ENCODE measurements at regions of chr17 and their contacts with region 1.

Region 1: DNA sequence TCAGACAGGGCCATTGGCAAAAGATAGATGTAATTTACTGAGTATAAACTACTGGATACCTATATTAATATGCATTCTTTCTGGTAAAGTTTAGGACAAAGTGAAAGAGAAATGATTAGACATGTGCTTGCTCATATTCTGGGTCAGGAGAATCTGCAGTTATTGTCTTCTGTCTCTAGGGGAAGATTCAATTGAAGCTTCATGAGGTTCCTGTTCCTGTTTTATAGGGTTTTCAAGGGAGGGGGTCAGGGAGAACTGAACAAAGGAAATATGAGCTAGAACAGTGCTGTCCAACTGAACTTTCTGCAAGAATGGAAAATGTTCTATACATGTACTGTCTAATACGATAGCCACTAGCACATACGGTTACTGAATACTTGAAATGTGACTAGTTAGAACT is 59.3 kb upstream of the CORO6 start:
- DNase-seq: no peak
- ATAC-seq: peak; percentile 93
- H3K4me3 Mint-ChIP-seq: peak overlapping the region; percentile 21
- H3K27ac Mint-ChIP-seq: peak overlapping the region; percentile 81
- H3K4me1 Mint-ChIP-seq: peaks cover 27% of the 10 kb centered on the region
- H3K27me3 Mint-ChIP-seq: no peaks in the 10 kb centered on the region
- CTCF ChIP-seq: no peak

Region 2: GRCh38 chr17:29699283-29699682 is 17.2 kb after region 1 on chr17:
- CTCF ChIA-PET with region 1: interaction called, 8 read pairs
- POLR2A ChIA-PET with region 1: interaction called, 27 read pairs
- intact Hi-C with region 1: loop called (anchors 2 kb)
- DNase-seq: no peak
- ATAC-seq: peak; percentile 21
- H3K4me3 Mint-ChIP-seq: no peak overlapping the region
- H3K27ac Mint-ChIP-seq: peak overlapping the region; percentile 19
- H3K4me1 Mint-ChIP-seq: peaks cover 33% of the 10 kb centered on the region
- H3K27me3 Mint-ChIP-seq: no peaks in the 10 kb centered on the region
- CTCF ChIP-seq: no peak

Region 3: DNA sequence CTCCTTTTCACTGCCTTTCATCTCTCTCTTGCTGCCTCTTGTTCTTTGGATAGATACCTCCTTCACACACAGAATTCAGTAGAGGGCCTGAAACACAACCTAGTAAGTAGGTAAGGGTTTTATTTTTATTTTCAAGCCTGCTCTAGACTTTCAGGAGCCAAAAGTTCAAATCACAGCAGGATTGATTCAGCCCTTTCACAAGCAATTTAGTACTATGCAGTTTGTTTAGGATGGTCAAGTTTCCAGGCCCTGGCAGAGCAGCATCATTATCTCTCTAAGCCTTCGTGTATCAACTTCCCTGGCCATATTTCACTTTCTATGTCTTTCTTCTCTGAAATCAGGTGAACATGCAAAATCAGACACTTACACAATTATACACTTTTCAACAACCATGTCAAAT is 89.5 kb after region 1 on chr17:
- CTCF ChIA-PET with region 1: interaction called, 45 read pairs
- POLR2A ChIA-PET with region 1: interaction called, 15 read pairs
- intact Hi-C with region 1: no loop called
- DNase-seq: no peak
- ATAC-seq: no peak
- H3K4me3 Mint-ChIP-seq: no peak overlapping the region
- H3K27ac Mint-ChIP-seq: peak overlapping the region; percentile 90
- H3K4me1 Mint-ChIP-seq: peaks cover 18% of the 10 kb centered on the region
- H3K27me3 Mint-ChIP-seq: no peaks in the 10 kb centered on the region
- CTCF ChIP-seq: no peak